CD4-positive, alpha-beta memory T cell (primary cell): ENCODE measurements at regions of chr3 and their contacts with region 1.

Region 1: GRCh38 chr3:51682079-51682478 is 11.0 kb downstream of the TEX264 start:
- DNase-seq: peak; percentile 81 to 85 (median 83)
- H3K4me3 ChIP-seq: peak overlapping the region; percentile 26 to 50
- H3K4me3 Mint-ChIP-seq: peak overlapping the region; percentile 74 to 91 (median 82)
- H3K27ac ChIP-seq: peak overlapping the region; percentile 48
- H3K27ac Mint-ChIP-seq: peak overlapping the region; percentile 57 to 97 (median 91)
- H3K4me1 ChIP-seq: peaks cover 100% of the 10 kb centered on the region
- H3K4me1 Mint-ChIP-seq: peaks cover 71 to 98% (median 90%) of the 10 kb centered on the region in 4 donors
- H3K27me3 ChIP-seq: no peaks in the 10 kb centered on the region
- H3K27me3 Mint-ChIP-seq: no peaks in the 10 kb centered on the region

Region 2: DNA sequence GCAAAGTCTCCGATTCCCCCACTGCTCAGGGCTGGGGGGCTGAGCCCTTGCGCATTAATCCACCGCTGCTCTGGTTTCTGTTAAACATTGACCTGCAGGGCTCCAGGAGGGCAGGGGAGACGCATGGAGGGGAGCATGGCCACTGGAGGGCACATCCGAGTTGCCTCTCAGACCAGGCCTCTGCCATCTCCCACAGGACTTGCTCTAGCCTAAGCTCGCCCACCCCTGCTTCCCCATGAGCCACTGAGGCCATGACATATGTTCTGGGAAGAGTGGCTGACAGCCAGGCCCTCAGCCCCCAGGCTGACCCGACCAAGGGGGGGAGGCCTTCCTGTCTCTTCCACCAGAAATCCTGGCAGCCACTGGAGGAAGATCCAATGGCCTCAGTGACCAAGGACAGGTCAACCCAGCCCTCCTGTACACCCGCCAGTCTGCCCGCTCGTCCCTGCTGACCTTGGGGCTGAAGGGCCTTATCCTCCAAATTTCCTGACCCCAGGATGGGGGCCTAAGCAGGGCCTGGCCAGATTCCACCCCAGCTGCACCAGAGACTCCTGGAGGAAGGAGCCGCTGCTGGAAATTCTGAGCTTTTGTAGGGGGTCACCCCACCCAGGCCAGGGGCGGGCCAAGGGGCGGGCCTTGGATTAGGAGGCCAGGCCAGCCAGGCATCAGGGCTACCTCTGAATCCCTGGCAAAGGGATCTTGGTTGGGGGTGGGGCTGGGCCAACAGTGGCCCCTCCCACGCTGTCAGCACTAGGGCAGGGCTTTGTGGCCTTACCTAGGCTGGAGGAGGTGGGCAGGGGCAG is 1378.9 kb before region 1 on chr3 and contains the start of gene HYAL1:
- CTCF ChIA-PET with region 1: no interaction called
- POLR2A ChIA-PET with region 1: no interaction called
- intact Hi-C with region 1: no loop called
- DNase-seq: peak in 1 of 5 donors; percentile 31
- H3K4me3 ChIP-seq: no peak within 1 kb of the TSS
- H3K4me3 Mint-ChIP-seq: no peak within 1 kb of the TSS
- H3K27ac ChIP-seq: no peak within 1 kb of the TSS
- H3K27ac Mint-ChIP-seq: no peak within 1 kb of the TSS
- H3K4me1 ChIP-seq: peaks cover 18% of the 10 kb centered on the region
- H3K4me1 Mint-ChIP-seq: peaks cover 12 to 29% (median 18%) of the 10 kb centered on the region in 4 donors
- H3K27me3 ChIP-seq: no peaks in the 10 kb centered on the region
- H3K27me3 Mint-ChIP-seq: no peaks in the 10 kb centered on the region
- total RNA-seq, gene HYAL1: 0.38 to 0.50 TPM

Region 3: GRCh38 chr3:51384726-51385473 is 297.2 kb before region 1 on chr3 and contains the start of gene MANF:
- CTCF ChIA-PET with region 1: interaction called, 24 read pairs
- POLR2A ChIA-PET with region 1: interaction called, 16 read pairs
- intact Hi-C with region 1: no loop called
- DNase-seq: peak; percentile 97 to 98 (median 98)
- H3K4me3 ChIP-seq: peak within 1 kb of the TSS; percentile 61 to 93
- H3K4me3 Mint-ChIP-seq: peak within 1 kb of the TSS; percentile 98 to 99 (median 99)
- H3K27ac ChIP-seq: peak within 1 kb of the TSS; percentile 92
- H3K27ac Mint-ChIP-seq: peak within 1 kb of the TSS; percentile 98 to 100 (median 99)
- H3K4me1 ChIP-seq: peaks cover 38% of the 10 kb centered on the region
- H3K4me1 Mint-ChIP-seq: peaks cover 25 to 62% (median 42%) of the 10 kb centered on the region in 4 donors
- H3K27me3 ChIP-seq: no peaks in the 10 kb centered on the region
- H3K27me3 Mint-ChIP-seq: no peaks in the 10 kb centered on the region
- total RNA-seq, gene MANF: 74.8 to 79.0 TPM

Region 4: GRCh38 chr3:51538459-51539290 is 143.4 kb before region 1 on chr3 and contains the start of gene RAD54L2:
- CTCF ChIA-PET with region 1: interaction called, 18 read pairs
- POLR2A ChIA-PET with region 1: interaction called, 3 read pairs
- intact Hi-C with region 1: no loop called
- DNase-seq: peak; percentile 62 to 74 (median 66)
- H3K4me3 ChIP-seq: peak within 1 kb of the TSS; percentile 76 to 80
- H3K4me3 Mint-ChIP-seq: peak within 1 kb of the TSS; percentile 85 to 98 (median 94)
- H3K27ac ChIP-seq: peak within 1 kb of the TSS; percentile 67
- H3K27ac Mint-ChIP-seq: peak within 1 kb of the TSS; percentile 91 to 97 (median 95)
- H3K4me1 ChIP-seq: peaks cover 27% of the 10 kb centered on the region
- H3K4me1 Mint-ChIP-seq: peaks cover 26 to 42% (median 33%) of the 10 kb centered on the region in 4 donors
- H3K27me3 ChIP-seq: no peaks in the 10 kb centered on the region
- H3K27me3 Mint-ChIP-seq: no peaks in the 10 kb centered on the region
- total RNA-seq, gene RAD54L2: 39.8 to 40.1 TPM

Region 5: DNA sequence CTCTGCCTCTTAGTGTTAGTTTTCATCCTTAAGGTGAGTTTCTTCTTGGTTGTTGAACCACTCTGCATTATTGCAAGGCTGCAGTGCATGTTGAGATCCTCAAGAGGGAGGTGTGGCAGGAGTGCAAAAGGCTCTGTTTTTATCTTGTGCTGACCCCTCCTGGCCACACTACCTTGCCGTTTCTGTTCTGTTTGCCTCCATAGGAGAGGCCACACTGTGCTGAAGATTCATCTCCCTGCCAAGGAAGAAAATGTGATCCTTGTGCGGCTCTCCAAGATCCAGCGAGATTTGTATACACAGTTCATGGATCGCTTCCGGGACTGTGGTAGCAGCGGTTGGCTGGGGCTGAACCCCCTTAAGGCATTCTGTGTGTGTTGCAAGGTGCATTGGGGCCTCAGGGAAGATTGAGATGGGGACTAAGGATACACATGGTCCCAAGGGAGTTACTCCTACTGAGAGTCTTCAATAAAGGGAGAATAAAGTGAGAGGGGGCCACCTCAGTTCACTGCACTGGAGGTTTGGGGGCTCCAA is 44.1 kb before region 1 on chr3:
- CTCF ChIA-PET with region 1: interaction called, 62 read pairs
- POLR2A ChIA-PET with region 1: interaction called, 10 read pairs
- intact Hi-C with region 1: loop called (anchors 1 kb)
- DNase-seq: peak in 2 of 5 donors; percentile 6 to 19
- H3K4me3 ChIP-seq: no peak overlapping the region
- H3K4me3 Mint-ChIP-seq: no peak overlapping the region
- H3K27ac ChIP-seq: no peak overlapping the region
- H3K27ac Mint-ChIP-seq: peak overlapping the region in 2 of 7 donors; percentile 27 to 29
- H3K4me1 ChIP-seq: no peaks in the 10 kb centered on the region
- H3K4me1 Mint-ChIP-seq: peaks cover 0 to 2% (median 0%) of the 10 kb centered on the region in 4 donors
- H3K27me3 ChIP-seq: no peaks in the 10 kb centered on the region
- H3K27me3 Mint-ChIP-seq: no peaks in the 10 kb centered on the region

Region 6: GRCh38 chr3:51670823-51671733 is 11.0 kb before region 1 on chr3 and contains the start of gene TEX264:
- CTCF ChIA-PET with region 1: interaction called, 324 read pairs
- POLR2A ChIA-PET with region 1: interaction called, 251 read pairs
- intact Hi-C with region 1: loop called (anchors 1 kb)
- DNase-seq: peak; percentile 95 to 97 (median 96)
- H3K4me3 ChIP-seq: peak within 1 kb of the TSS; percentile 88 to 89
- H3K4me3 Mint-ChIP-seq: peak within 1 kb of the TSS; percentile 88 to 95 (median 92)
- H3K27ac ChIP-seq: peak within 1 kb of the TSS; percentile 83
- H3K27ac Mint-ChIP-seq: peak within 1 kb of the TSS; percentile 95 to 97 (median 97)
- H3K4me1 ChIP-seq: peaks cover 66% of the 10 kb centered on the region
- H3K4me1 Mint-ChIP-seq: peaks cover 54 to 74% (median 63%) of the 10 kb centered on the region in 4 donors
- H3K27me3 ChIP-seq: no peaks in the 10 kb centered on the region
- H3K27me3 Mint-ChIP-seq: no peaks in the 10 kb centered on the region
- total RNA-seq, gene TEX264: 40.0 to 40.9 TPM

Region 7: DNA sequence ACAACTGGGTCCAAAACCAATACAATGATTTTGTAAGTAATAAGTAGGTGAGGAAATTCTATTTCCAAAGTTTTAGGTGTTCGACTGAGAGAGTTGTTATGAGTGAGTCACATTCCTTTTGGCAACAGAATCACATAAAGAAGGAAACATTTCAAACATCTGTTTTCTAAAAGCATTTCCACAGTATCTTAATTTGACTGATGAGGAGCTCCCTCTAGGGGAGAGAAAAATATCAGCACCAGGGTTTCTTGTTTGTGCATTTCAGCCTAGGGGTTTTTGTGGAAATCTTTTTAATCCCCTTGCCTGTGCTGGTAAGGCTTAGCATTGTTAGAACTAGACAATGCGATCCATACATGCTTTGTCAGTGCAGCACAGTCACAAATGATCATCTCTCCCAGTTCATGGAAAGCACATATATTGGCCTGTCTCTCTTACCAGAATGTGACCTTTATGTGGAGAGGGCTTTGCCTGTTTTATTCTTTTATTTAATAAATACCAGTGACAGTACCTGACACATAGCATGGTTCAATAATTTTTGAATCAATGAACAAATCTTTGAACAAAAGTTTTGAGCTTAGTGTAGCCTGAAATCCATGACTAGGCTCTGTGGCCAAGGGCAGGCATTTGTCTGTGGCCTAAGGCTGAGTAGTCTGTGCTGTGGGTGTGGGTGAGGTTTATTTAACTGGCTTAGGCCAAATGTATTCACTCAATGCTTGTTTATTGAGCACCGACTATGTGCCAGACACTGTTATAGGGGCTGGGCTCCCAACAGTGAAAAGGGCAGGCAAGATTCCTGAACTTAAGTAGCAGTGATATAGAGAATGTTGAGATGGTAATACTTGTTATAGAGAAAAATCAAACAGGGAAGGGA is 118.0 kb after region 1 on chr3:
- CTCF ChIA-PET with region 1: interaction called, 10 read pairs
- POLR2A ChIA-PET with region 1: no interaction called
- intact Hi-C with region 1: loop called (anchors 10 kb)
- DNase-seq: peak in 4 of 5 donors; percentile 44 to 61 (median 57)
- H3K4me3 ChIP-seq: no peak overlapping the region
- H3K4me3 Mint-ChIP-seq: no peak overlapping the region
- H3K27ac ChIP-seq: no peak overlapping the region
- H3K27ac Mint-ChIP-seq: peak overlapping the region in 1 of 7 donors; percentile 37
- H3K4me1 ChIP-seq: peaks cover 7% of the 10 kb centered on the region
- H3K4me1 Mint-ChIP-seq: peaks cover 5 to 25% (median 13%) of the 10 kb centered on the region in 4 donors
- H3K27me3 ChIP-seq: no peaks in the 10 kb centered on the region
- H3K27me3 Mint-ChIP-seq: peaks cover 2 to 4% of the 10 kb centered on the region in 2 donors